Activated naive CD8-positive, alpha-beta T cell treated with anti-CD3 and anti-CD28 coated beads, Interleukin-2, amount 10 ng/mL, durations not matched to agents 7 days and 5 days (primary cell): ENCODE measurements at regions of chr15 and their contacts with region 1.

Region 1: DNA sequence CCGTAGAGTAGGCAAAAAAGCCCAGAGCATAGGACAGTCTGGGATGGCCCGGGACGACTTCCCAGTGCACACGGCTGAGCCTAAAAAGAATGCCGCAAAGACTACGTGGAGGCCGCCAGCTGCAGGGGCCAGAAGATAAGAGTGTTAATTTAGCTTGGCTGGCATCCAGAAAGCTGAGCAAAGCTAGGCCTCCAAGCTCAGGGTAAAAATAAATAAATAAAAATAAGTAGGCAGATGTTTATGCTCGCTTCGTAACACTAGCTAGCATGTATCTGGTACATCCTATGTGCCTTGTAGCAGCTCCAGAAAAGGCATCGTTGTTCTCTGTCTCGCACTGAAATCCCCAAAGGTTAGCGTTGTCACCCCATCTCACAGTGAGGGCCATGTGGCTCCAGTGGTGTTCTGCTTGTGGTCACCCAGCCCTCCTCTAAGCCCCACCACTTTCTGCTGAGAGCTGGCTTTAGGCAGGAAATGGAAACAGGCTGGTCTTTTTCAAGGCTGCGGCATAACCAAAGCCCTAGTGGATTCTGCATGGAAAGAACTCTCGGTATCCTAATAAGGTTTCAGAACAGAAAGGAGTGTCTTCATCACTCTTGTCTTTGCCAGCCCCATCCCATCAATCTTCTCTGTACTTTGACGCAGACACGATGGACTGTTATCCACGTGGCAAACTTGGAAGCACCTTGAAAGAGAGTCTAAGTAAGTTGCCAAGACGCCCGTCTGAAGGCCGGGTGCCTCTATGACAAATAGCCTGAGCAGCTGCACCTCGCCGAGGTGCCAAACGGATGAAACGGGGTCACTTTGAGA is 58.1 kb upstream of the MEF2A start:
- DNase-seq: no peak
- ATAC-seq: peak; percentile 53
- H3K4me3 Mint-ChIP-seq: peak overlapping the region; percentile 55
- H3K27ac Mint-ChIP-seq: peak overlapping the region; percentile 67
- H3K4me1 Mint-ChIP-seq: peaks cover 75% of the 10 kb centered on the region
- H3K27me3 Mint-ChIP-seq: no peaks in the 10 kb centered on the region

Region 2: GRCh38 chr15:99565299-99566156 is 57.8 kb after region 1 on chr15 and contains the start of gene MEF2A:
- POLR2A ChIA-PET with region 1: interaction called, 14 read pairs
- DNase-seq: peak; percentile 92
- ATAC-seq: peak; percentile 81
- H3K4me3 Mint-ChIP-seq: peak within 1 kb of the TSS; percentile 96
- H3K27ac Mint-ChIP-seq: peak within 1 kb of the TSS; percentile 95
- H3K4me1 Mint-ChIP-seq: peaks cover 29% of the 10 kb centered on the region
- H3K27me3 Mint-ChIP-seq: peaks cover 2% of the 10 kb centered on the region
- total RNA-seq, gene MEF2A: 29.0 to 31.8 TPM